ENCODE measurements at regions of chr4 and their contacts with region 1.

Region 1: GRCh38 chr4:81405894-81406401 is 65.8 kb downstream of the RASGEF1B start:
- DNase-seq: peak; percentile 85
- ATAC-seq: peak; percentile 85
- H3K4me3 ChIP-seq: peak overlapping the region in 1 of 5 experiments; percentile 12
- H3K4me3 Mint-ChIP-seq: no peak overlapping the region
- H3K27ac ChIP-seq: no peak overlapping the region
- H3K27ac Mint-ChIP-seq: no peak overlapping the region
- H3K4me1 ChIP-seq: no peaks in the 10 kb centered on the region
- H3K4me1 Mint-ChIP-seq: peaks cover 3% of the 10 kb centered on the region
- H3K27me3 ChIP-seq: no peaks in the 10 kb centered on the region
- H3K27me3 Mint-ChIP-seq: no peaks in the 10 kb centered on the region
- CTCF ChIP-seq: peak; percentile 99

Region 2: GRCh38 chr4:81919238-81919637 is 513.3 kb after region 1 on chr4:
- CTCF ChIA-PET with region 1: interaction called, 20 read pairs
- POLR2A ChIA-PET with region 1: no interaction called
- intact Hi-C with region 1: loop called (anchors 1 kb)
- DNase-seq: peak; percentile 34
- ATAC-seq: peak; percentile 72
- H3K4me3 ChIP-seq: no peak overlapping the region
- H3K4me3 Mint-ChIP-seq: no peak overlapping the region
- H3K27ac ChIP-seq: no peak overlapping the region
- H3K27ac Mint-ChIP-seq: no peak overlapping the region
- H3K4me1 ChIP-seq: peaks cover 3% of the 10 kb centered on the region in 2 donors
- H3K4me1 Mint-ChIP-seq: no peaks in the 10 kb centered on the region
- H3K27me3 ChIP-seq: peaks cover 0 to 3% (median under 1%) of the 10 kb centered on the region in 4 experiments
- H3K27me3 Mint-ChIP-seq: peaks cover 21% of the 10 kb centered on the region
- CTCF ChIP-seq: peak; percentile 63

Region 3: GRCh38 chr4:82217986-82218715 is 812.2 kb after region 1 on chr4:
- CTCF ChIA-PET with region 1: no interaction called
- POLR2A ChIA-PET with region 1: no interaction called
- intact Hi-C with region 1: loop called (anchors 5 kb)
- DNase-seq: peak; percentile 8
- ATAC-seq: no peak
- H3K4me3 ChIP-seq: no peak overlapping the region
- H3K4me3 Mint-ChIP-seq: no peak overlapping the region
- H3K27ac ChIP-seq: no peak overlapping the region
- H3K27ac Mint-ChIP-seq: no peak overlapping the region
- H3K4me1 ChIP-seq: peaks cover under 1 to 6% of the 10 kb centered on the region in 2 donors
- H3K4me1 Mint-ChIP-seq: peaks cover 4% of the 10 kb centered on the region
- H3K27me3 ChIP-seq: no peaks in the 10 kb centered on the region
- H3K27me3 Mint-ChIP-seq: no peaks in the 10 kb centered on the region
- CTCF ChIP-seq: no peak

Region 4: GRCh38 chr4:82360298-82361177 is 954.6 kb after region 1 on chr4:
- CTCF ChIA-PET with region 1: interaction called, 4 read pairs
- POLR2A ChIA-PET with region 1: no interaction called
- intact Hi-C with region 1: loop called (anchors 1 kb)
- DNase-seq: peak; percentile 66
- ATAC-seq: peak; percentile 65
- H3K4me3 ChIP-seq: no peak overlapping the region
- H3K4me3 Mint-ChIP-seq: no peak overlapping the region
- H3K27ac ChIP-seq: peak overlapping the region in 1 of 2 donors; percentile 69
- H3K27ac Mint-ChIP-seq: peak overlapping the region; percentile 74
- H3K4me1 ChIP-seq: peaks cover 37 to 67% of the 10 kb centered on the region in 2 donors
- H3K4me1 Mint-ChIP-seq: peaks cover 75% of the 10 kb centered on the region
- H3K27me3 ChIP-seq: no peaks in the 10 kb centered on the region
- H3K27me3 Mint-ChIP-seq: no peaks in the 10 kb centered on the region
- CTCF ChIP-seq: peak; percentile 85